ENCODE measurements at regions of chr22 and their contacts with region 1.

Region 1: DNA sequence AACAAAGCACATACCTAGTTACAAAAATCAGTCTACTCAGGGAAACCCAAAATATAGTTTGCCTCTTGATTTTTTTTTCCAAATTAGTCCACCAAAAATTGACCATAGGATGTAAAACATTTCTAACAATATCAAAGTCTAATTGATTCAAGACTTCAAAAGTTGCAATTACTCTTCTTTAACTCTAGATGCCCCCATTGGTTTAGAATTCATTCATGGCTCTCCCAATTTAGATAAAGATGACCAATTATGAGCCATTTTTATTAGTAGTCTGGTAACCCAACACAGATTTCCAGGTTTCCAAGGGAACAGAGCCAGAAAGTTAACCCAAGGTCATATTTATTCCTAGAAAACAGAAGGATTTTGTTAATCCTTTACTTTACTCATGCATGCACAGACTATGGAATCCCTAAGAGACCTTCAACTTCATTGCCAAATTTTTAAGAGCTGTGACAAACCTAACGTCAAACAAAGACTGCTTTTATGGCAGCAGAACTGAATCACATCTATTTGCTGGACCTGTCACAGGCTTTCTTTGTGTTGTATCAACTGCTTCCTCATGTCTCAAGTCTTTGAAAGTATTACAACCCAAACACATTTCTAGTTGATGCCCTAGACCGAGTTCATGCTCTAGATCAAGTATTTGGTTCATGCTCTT is 55.3 kb downstream of the C22orf42 start:
- DNase-seq: no peak
- ATAC-seq: no peak

Region 2: GRCh38 chr22:31952459-31952858 is 151.3 kb before region 1 on chr22:
- intact Hi-C with region 1: no loop called
- DNase-seq: no peak
- ATAC-seq: peak; percentile 14 to 84

Region 3: GRCh38 chr22:32265882-32266767 is 162.3 kb after region 1 on chr22:
- intact Hi-C with region 1: loop called in 1 of 2 experiments (anchors 10 kb)
- DNase-seq: peak; percentile 77
- ATAC-seq: peak; percentile 73 to 74

Measured in left cardiac atrium (tissue), 4 donors.